Posterior vena cava (tissue), 2 donors: ENCODE measurements at regions of chr13 and their contacts with region 1.

Region 1: GRCh38 chr13:44938854-44939253 is 50.4 kb downstream of the NUFIP1 start:
- DNase-seq: no peak

Region 2: GRCh38 chr13:44917589-44918325 is 21.1 kb before region 1 on chr13:
- intact Hi-C with region 1: no loop called
- DNase-seq: peak; percentile 98

Region 3: GRCh38 chr13:44954224-44954623 is 15.4 kb after region 1 on chr13:
- intact Hi-C with region 1: loop called in 1 of 2 experiments (anchors 1 kb)
- DNase-seq: no peak